BJ (cell line): ENCODE measurements at regions of chr16 and their contacts with region 1.

Region 1: GRCh38 chr16:714558-715476 is at the start of gene METRN:
- DNase-seq: no peak
- H3K4me3 ChIP-seq: peak within 1 kb of the TSS; percentile 64
- H3K27me3 ChIP-seq: no peaks in the 10 kb centered on the region
- CTCF ChIP-seq: no peak
- polyA plus RNA-seq, gene METRN: 33.7 and 40.3 TPM in 2 replicates

Region 2: DNA sequence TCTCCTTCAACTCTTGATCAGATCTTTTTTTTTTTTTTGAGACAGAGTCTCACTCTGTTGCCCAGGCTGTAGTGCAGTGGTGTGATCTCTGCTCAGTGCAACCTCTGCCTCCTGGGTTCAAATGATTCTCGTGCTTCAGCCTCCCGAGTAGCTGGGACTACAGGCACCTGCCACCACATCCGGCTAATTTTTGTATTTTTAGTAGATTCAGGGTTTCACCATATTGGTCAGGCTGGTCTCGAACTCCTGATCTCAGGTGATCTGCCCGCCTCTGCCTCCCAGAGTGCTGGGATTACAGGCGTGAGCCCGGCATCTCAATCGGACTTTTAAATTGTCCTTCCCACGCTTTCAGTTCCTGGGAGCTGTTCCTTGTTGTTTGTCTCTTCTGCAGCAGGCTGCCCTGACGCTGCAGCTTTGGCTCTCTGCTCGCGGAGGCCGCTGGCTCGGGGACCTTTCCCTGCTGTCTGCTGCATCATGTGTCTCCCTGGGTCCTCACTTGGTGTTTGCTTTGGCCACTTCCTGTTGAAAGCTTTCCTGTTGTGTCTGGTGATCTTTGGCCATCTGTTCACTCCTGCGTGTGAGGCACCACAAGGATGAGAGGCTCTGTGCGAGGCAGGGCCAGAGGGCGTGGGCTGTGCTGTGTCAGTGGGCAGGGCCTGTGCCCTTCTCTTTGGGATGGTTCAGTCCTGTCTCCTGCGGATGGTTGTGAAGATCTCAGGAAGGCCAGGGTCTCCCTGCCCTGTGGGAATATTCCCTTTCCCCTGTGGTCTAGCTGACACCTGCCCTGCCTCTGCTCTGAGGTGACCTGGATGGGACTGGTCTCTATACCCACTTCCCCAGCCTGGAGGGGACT is 205.7 kb before region 1 on chr16:
- CTCF ChIA-PET with region 1: no interaction called
- POLR2A ChIA-PET with region 1: no interaction called
- DNase-seq: no peak
- H3K4me3 ChIP-seq: no peak overlapping the region
- H3K27me3 ChIP-seq: no peaks in the 10 kb centered on the region
- CTCF ChIP-seq: no peak

Region 3: DNA sequence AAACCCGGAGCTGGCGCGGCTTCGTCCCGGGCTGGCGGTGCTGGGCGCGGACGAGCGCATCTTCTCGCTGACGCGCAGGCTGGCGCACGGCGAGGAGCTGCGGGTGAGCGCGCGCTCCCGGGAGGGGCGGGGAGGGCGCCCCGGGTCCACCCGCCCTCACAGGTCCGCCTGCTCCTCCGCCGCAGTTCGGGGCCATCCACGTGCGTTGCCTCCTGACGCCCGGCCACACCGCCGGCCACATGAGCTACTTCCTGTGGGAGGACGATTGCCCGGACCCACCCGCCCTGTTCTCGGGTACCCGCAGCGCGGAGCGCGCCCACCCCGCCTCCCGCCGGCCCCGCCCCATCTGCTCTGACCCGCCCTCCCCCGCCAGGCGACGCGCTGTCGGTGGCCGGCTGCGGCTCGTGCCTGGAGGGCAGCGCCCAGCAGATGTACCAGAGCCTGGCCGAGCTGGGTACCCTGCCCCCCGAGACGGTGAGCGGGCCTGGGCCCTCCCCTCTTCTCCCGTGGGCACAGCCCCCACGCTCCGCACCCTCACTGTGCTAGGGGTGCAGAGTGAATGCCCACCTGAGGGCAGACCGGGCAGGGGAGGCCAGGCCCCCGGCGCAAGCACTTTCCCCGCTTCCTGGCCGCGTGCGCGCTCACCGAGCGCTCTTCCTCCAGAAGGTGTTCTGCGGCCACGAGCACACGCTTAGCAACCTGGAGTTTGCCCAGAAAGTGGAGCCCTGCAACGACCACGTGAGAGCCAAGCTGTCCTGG is 13.5 kb after region 1 on chr16:
- CTCF ChIA-PET with region 1: interaction called, 18 read pairs
- POLR2A ChIA-PET with region 1: interaction called, 3 read pairs
- DNase-seq: no peak
- H3K4me3 ChIP-seq: peak overlapping the region; percentile 66
- H3K27me3 ChIP-seq: no peaks in the 10 kb centered on the region
- CTCF ChIP-seq: no peak

Region 4: DNA sequence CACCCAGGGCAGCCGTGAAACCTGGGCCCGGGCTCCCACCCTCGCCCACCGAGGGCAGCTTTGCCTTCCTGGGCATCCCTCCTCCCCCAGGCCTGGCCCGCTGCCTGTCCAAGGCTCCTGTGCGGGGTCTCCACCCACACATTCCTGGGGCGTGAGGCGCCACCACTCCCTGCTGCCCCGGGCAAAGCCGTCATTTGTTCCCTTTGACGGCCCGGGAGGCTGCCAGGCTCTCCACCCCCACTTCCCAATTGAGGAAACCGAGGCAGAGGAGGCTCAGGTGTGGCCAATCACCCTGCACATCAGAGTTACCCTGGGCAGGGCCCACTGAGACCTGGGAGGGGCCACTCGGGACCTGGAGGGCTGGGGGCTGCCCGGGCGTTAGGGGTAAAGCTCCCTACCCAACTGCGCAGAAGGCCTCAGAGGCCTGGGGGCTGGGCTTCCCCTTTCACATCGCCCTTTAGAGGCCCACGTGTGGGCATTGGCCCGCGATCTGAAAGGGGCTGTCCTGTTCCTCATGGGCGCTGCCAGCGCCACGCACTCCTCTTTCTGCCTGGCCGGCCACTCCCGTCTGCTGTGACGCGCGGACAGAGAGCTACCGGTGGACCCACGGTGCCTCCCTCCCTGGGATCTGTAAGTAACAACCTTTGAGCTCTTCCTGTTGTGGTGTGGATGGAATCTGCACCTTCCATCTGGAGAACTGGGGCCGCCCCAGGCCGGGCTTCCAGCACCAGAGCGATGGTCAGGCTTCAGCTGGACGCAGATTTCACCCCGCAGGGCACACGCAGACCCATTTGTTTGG is 45.9 kb after region 1 on chr16 and contains the start of gene MSLN:
- CTCF ChIA-PET with region 1: interaction called, 4 read pairs
- POLR2A ChIA-PET with region 1: interaction called, 18 read pairs
- DNase-seq: no peak
- H3K4me3 ChIP-seq: no peak within 1 kb of the TSS
- H3K27me3 ChIP-seq: no peaks in the 10 kb centered on the region
- CTCF ChIP-seq: no peak
- polyA plus RNA-seq, gene MSLN: 0.25 and 0.67 TPM in 2 replicates